Activated CD8-positive, alpha-beta T cell treated with anti-CD3 and anti-CD28 coated beads for 36 hours (primary cell): ENCODE measurements at regions of chr1 and their contacts with region 1.

Region 1: DNA sequence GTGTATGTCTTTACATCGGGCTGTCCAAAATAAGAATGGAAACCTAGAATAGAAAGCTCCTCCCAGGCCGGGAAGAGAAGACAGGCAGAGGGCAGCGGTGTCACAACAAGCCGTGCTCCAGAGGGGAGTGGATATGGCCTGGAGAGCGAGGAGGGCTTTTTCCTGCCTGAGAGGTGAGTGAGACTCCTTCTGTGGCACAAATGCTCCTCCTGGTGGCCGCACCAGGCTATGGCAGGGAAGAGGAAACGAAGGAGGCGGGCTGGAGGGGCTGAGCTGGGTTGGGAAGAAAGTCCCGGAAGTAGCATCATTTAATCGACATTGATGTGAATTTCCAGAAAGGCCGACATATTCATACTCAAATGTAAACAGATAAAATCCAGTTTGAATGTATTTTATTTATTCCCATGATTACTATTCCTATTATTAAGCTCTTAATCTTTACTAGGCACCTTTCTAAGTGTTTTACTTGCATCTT is 54.7 kb downstream of the MEF2D start:
- DNase-seq: peak; percentile 87
- ATAC-seq: peak; percentile 93
- H3K4me3 Mint-ChIP-seq: peak overlapping the region; percentile 4
- H3K27ac Mint-ChIP-seq: no peak overlapping the region
- H3K4me1 Mint-ChIP-seq: peaks cover 20% of the 10 kb centered on the region
- H3K27me3 Mint-ChIP-seq: peaks cover 45% of the 10 kb centered on the region
- CTCF ChIP-seq: peak; percentile 99

Region 2: DNA sequence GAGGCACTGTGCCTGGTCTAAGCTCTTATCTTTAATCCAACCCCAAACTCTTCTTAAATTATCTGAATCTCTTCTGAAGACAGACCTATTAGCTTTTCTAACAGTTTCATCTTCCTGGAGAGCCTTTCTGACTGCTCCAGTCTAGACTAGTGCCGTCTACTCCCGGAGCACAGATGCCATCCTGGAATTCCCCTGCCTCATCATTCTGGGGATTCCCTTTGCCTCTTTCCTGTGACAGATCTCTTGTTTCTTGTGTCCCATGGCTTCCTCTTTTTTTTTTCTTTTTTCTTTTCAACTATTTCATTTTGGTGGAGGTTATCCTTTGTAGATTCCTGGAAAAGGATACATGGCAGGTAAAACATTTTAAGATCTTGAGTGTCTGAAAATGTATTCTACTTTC is 280.7 kb before region 1 on chr1:
- CTCF ChIA-PET with region 1: no interaction called
- POLR2A ChIA-PET with region 1: no interaction called
- intact Hi-C with region 1: no loop called
- DNase-seq: no peak
- ATAC-seq: no peak
- H3K4me3 Mint-ChIP-seq: no peak overlapping the region
- H3K27ac Mint-ChIP-seq: no peak overlapping the region
- H3K4me1 Mint-ChIP-seq: peaks cover 23% of the 10 kb centered on the region
- H3K27me3 Mint-ChIP-seq: no peaks in the 10 kb centered on the region
- CTCF ChIP-seq: no peak

Region 3: GRCh38 chr1:156356875-156357534 is 88.8 kb before region 1 on chr1:
- CTCF ChIA-PET with region 1: interaction called, 27 read pairs
- POLR2A ChIA-PET with region 1: no interaction called
- intact Hi-C with region 1: no loop called
- DNase-seq: peak; percentile 74
- ATAC-seq: peak; percentile 100
- H3K4me3 Mint-ChIP-seq: no peak overlapping the region
- H3K27ac Mint-ChIP-seq: no peak overlapping the region
- H3K4me1 Mint-ChIP-seq: peaks cover 8% of the 10 kb centered on the region
- H3K27me3 Mint-ChIP-seq: peaks cover 19% of the 10 kb centered on the region
- CTCF ChIP-seq: peak; percentile 84

Region 4: GRCh38 chr1:156401681-156402081 is 44.1 kb before region 1 on chr1:
- CTCF ChIA-PET with region 1: interaction called, 11 read pairs
- POLR2A ChIA-PET with region 1: no interaction called
- intact Hi-C with region 1: no loop called
- DNase-seq: no peak
- ATAC-seq: no peak
- H3K4me3 Mint-ChIP-seq: no peak overlapping the region
- H3K27ac Mint-ChIP-seq: no peak overlapping the region
- H3K4me1 Mint-ChIP-seq: no peaks in the 10 kb centered on the region
- H3K27me3 Mint-ChIP-seq: peaks cover 11% of the 10 kb centered on the region
- CTCF ChIP-seq: no peak

Region 5: GRCh38 chr1:156428746-156429288 is 17.0 kb before region 1 on chr1:
- CTCF ChIA-PET with region 1: interaction called, 59 read pairs
- POLR2A ChIA-PET with region 1: no interaction called
- intact Hi-C with region 1: no loop called
- DNase-seq: no peak
- ATAC-seq: no peak
- H3K4me3 Mint-ChIP-seq: no peak overlapping the region
- H3K27ac Mint-ChIP-seq: no peak overlapping the region
- H3K4me1 Mint-ChIP-seq: peaks cover 22% of the 10 kb centered on the region
- H3K27me3 Mint-ChIP-seq: peaks cover 81% of the 10 kb centered on the region
- CTCF ChIP-seq: no peak

Region 6: DNA sequence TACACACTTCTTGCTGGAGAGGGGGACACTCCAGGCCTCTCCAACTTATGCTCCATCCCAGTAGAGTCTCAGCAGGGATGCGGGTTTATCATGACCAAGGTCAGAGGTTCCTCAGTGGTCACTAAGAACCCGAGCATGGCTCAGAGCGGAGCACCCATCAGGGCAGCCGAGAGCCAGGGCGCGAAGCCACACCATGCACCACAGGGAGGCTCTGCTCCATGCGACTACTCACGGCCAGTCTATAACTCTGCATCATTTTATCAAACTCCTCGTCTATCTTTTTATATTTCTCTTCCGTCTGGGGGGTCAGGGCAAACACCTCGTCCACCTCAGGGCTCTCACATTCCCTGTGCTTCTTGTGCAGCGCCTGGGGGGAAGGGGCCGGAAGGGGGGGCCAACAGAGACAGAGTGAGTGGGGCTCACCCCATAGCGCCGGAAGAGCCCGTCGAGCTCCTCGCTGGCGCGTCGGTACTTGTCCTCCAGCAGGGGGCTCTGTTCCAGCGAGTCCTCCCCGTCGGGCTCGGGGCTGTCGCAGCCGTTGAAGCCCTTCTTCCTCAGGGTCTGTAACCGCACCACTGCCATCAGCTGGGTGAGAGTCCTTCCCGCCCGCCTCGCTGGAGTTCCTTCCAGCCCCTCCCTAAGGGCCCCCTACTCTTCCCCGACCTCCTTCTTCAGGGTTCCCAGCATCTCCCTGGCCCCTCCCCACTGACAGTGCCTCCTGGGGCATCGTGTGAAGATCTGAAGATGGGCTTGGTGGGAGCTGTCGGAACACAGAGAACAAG is 34.8 kb after region 1 on chr1:
- CTCF ChIA-PET with region 1: interaction called, 14 read pairs
- POLR2A ChIA-PET with region 1: no interaction called
- intact Hi-C with region 1: no loop called
- DNase-seq: peak; percentile 83
- ATAC-seq: peak; percentile 91
- H3K4me3 Mint-ChIP-seq: peak overlapping the region; percentile 20
- H3K27ac Mint-ChIP-seq: peak overlapping the region; percentile 79
- H3K4me1 Mint-ChIP-seq: peaks cover 58% of the 10 kb centered on the region
- H3K27me3 Mint-ChIP-seq: no peaks in the 10 kb centered on the region
- CTCF ChIP-seq: peak; percentile 73

Region 7: GRCh38 chr1:156583821-156584622 is 138.2 kb after region 1 on chr1:
- CTCF ChIA-PET with region 1: interaction called, 12 read pairs
- POLR2A ChIA-PET with region 1: no interaction called
- intact Hi-C with region 1: no loop called
- DNase-seq: peak; percentile 93
- ATAC-seq: peak; percentile 43
- H3K4me3 Mint-ChIP-seq: peak overlapping the region; percentile 90
- H3K27ac Mint-ChIP-seq: peak overlapping the region; percentile 99
- H3K4me1 Mint-ChIP-seq: peaks cover 15% of the 10 kb centered on the region
- H3K27me3 Mint-ChIP-seq: no peaks in the 10 kb centered on the region
- CTCF ChIP-seq: peak; percentile 98